Activated T-helper 1 cell treated with anti-CD3 and anti-CD28 coated beads, Interleukin-12 subunit alpha, Interleukin-12 subunit beta, Interleukin-2, Interleukin-4 antibody, amounts not matched to agents 30 ng/mL and 10 ng/mL and 1 ng/mL, durations not matched to agents 14 hours and 24 hours and 36 hours (primary cell): ENCODE measurements at regions of chr3 and their contacts with region 1.

Region 1: GRCh38 chr3:107927361-107928083 is 163.3 kb downstream of the CD47 start:
- DNase-seq: peak; percentile 50
- H3K4me3 Mint-ChIP-seq: peak overlapping the region; percentile 85
- H3K27ac Mint-ChIP-seq: no peak overlapping the region
- H3K4me1 Mint-ChIP-seq: peaks cover 9% of the 10 kb centered on the region
- H3K27me3 Mint-ChIP-seq: peaks cover 18% of the 10 kb centered on the region

Region 2: DNA sequence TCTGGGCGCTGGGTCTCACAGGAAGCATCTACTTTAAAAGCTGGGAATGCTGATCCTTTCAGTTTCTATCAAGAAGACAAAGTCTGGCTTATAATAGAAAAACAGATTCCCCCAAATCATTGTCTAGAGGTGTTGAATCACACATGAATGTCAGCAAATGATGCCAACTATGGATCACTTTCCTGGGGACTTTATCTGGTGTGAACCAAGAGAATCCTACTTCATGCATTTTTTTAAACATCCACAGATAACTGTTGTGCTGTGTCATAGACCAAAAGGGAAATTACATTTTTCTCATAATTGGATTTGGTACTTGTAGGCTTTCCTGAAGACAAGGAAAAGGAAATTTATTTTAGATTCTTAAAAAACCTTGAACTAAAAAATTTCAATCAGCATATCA is 30.6 kb after region 1 on chr3:
- intact Hi-C with region 1: loop called (anchors 1 kb)
- DNase-seq: no peak
- H3K4me3 Mint-ChIP-seq: no peak overlapping the region
- H3K27ac Mint-ChIP-seq: no peak overlapping the region
- H3K4me1 Mint-ChIP-seq: peaks cover 11% of the 10 kb centered on the region
- H3K27me3 Mint-ChIP-seq: peaks cover 10% of the 10 kb centered on the region